ENCODE measurements at regions of chr9 and their contacts with region 1.

Region 1: GRCh38 chr9:136118320-136119060 is at the start of gene TMEM250:
- DNase-seq: peak; percentile 74 to 96
- H3K4me3 ChIP-seq: peak within 1 kb of the TSS; percentile 71 to 86
- H3K27ac ChIP-seq: peak within 1 kb of the TSS; percentile 88 to 94
- H3K4me1 ChIP-seq: peaks cover 10 to 19% of the 10 kb centered on the region in 2 donors
- H3K27me3 ChIP-seq: no peaks in the 10 kb centered on the region
- CTCF ChIP-seq: peak in 1 of 3 experiments; percentile 38
- total RNA-seq, gene TMEM250: 80.3 TPM

Region 2: GRCh38 chr9:135544981-135545635 is 573.4 kb before region 1 on chr9:
- intact Hi-C with region 1: no loop called
- DNase-seq: peak in 1 of 2 donors; percentile 37
- H3K4me3 ChIP-seq: no peak overlapping the region
- H3K27ac ChIP-seq: no peak overlapping the region
- H3K4me1 ChIP-seq: no peaks in the 10 kb centered on the region
- H3K27me3 ChIP-seq: no peaks in the 10 kb centered on the region
- CTCF ChIP-seq: no peak

Region 3: DNA sequence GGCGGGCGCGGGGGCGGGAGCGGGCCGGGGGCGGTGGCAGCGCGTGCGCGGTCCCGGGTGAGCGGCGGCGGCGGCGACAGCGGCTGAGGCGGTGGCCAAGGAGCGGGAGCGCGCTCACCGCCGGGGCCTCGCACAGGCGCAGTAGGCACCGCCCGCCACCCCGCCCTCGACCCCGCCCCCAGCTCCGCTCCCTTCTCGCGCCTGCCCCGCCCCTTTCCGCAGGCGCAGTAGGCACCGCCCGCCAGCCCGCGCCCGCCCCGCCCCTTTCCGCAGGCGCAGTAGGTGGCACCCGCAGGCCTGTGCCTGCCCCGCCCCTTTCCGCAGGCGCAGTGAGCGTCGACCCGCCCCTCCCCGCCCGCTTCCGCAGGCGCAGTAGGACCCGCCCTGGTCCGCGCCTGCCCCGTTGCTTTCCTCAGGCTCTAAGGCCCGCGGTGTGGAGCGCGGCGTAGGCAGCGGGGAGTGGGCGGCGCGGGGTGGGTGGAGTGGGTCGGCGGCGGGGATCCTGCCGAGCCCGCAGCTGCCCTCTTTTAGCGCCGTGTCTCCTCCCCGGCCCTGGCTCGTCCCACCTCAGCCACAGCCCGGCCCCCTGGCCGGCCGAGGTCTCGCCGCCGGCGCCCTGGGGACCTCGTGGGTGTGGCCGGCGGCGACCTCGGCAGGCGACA is 210.9 kb before region 1 on chr9 and contains the start of gene CAMSAP1:
- intact Hi-C with region 1: loop called (anchors 2 kb)
- DNase-seq: peak; percentile 53 to 95
- H3K4me3 ChIP-seq: peak within 1 kb of the TSS; percentile 89 to 97
- H3K27ac ChIP-seq: peak within 1 kb of the TSS; percentile 58 to 76
- H3K4me1 ChIP-seq: peaks cover 10 to 21% of the 10 kb centered on the region in 2 donors
- H3K27me3 ChIP-seq: no peaks in the 10 kb centered on the region
- CTCF ChIP-seq: no peak
- total RNA-seq, gene CAMSAP1: 10.1 TPM

Region 4: GRCh38 chr9:135971892-135972291 is 146.6 kb before region 1 on chr9:
- intact Hi-C with region 1: loop called (anchors 1 kb)
- DNase-seq: no peak
- H3K4me3 ChIP-seq: no peak overlapping the region
- H3K27ac ChIP-seq: no peak overlapping the region
- H3K4me1 ChIP-seq: peaks cover 0 to 5% of the 10 kb centered on the region in 2 donors
- H3K27me3 ChIP-seq: no peaks in the 10 kb centered on the region
- CTCF ChIP-seq: no peak

Region 5: DNA sequence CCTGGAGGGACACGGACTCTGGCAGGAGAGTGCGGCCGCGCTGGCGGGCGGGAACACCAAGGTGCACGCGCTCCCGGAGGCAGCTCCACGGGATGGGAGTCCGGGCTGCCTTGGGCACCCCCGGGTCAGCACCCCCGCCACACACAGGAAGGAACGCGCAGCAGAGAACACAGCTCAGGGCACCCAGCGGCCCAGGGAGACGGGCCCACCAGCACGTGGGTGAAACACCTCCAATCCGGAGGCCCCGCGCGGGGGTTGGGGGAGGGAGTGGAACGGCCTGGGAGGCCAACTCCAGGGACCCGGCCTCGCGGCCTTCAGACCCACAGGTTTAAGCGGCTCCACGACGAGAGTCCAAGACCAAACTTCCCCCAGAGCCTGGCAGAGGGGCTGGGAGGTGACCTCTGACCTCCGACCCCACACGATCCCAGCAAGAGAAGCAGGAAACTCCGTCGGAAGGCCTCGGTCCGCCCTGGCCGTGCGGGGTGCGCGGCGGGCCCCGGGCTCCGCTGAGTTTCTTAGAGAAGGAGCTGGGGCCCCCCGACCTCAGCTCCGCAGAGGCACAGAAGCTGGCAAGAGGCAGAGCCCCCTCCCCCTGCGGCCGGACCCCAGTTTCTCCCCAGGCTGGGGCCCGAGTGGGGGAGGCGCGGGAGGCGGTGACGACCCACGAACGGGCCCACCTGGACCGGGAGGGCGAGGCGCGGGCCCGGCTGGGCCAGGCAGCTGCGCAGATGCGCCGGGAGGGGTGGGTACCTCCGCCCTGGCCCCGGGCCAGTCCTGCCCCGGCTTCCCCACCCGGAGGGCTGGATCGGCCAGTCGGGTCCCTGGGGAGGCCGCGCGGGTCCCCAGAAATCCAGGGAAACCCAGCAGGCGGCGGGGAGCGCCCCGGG is 24.3 kb before region 1 on chr9:
- intact Hi-C with region 1: loop called (anchors 1 kb)
- DNase-seq: peak in 1 of 2 donors; percentile 91
- H3K4me3 ChIP-seq: peak overlapping the region; percentile 91 to 94
- H3K27ac ChIP-seq: peak overlapping the region; percentile 91 to 98
- H3K4me1 ChIP-seq: peaks cover 22 to 48% of the 10 kb centered on the region in 2 donors
- H3K27me3 ChIP-seq: no peaks in the 10 kb centered on the region
- CTCF ChIP-seq: peak in 2 of 3 experiments; percentile 9 to 19

Measured in ascending aorta (tissue), 2 donors.